ENCODE measurements at regions of chr18 and their contacts with region 1.

Region 1: GRCh38 chr18:11040823-11041656 is 108.3 kb downstream of the PIEZO2 start:
- H3K4me3 ChIP-seq: no peak overlapping the region
- H3K27ac ChIP-seq: no peak overlapping the region
- H3K4me1 ChIP-seq: peaks cover 2% of the 10 kb centered on the region; the same call in 1 of the 2 replicates
- CTCF ChIP-seq: no peak

Region 2: DNA sequence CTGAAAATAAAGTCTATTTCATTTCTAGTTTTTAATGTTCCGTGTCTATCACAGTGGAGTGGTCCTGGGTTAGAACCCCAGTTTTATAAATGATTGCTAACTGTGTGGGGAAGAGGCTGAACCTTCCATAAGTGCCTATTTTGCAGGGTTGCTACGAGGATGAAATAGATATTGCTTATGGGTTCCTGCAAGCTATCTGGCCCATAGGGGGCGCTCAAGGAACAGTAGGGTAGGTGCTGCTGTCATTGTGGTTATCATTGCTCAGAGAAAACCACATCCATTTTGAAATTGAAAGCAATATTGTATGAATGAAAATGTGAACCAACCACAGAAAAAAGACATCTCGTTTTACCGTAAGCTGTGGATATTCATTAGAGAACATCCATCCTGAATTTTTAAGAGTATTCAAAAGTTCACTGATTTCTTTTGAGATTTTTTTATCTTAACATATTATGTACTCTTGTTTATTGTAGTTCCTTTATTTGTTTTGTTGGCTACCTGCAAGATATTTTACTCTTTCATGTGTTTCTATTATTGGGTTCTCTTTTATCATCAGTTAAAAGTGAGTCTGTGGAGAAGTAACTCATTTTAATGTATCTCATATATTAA is 253.6 kb before region 1 on chr18:
- CTCF ChIA-PET with region 1: interaction called, 15 read pairs
- POLR2A ChIA-PET with region 1: no interaction called
- H3K4me3 ChIP-seq: no peak overlapping the region
- H3K27ac ChIP-seq: no peak overlapping the region
- H3K4me1 ChIP-seq: no peaks in the 10 kb centered on the region
- CTCF ChIP-seq: 0 out of 2 replicates have a peak, but pooled peaks have one; percentile 33

Region 3: DNA sequence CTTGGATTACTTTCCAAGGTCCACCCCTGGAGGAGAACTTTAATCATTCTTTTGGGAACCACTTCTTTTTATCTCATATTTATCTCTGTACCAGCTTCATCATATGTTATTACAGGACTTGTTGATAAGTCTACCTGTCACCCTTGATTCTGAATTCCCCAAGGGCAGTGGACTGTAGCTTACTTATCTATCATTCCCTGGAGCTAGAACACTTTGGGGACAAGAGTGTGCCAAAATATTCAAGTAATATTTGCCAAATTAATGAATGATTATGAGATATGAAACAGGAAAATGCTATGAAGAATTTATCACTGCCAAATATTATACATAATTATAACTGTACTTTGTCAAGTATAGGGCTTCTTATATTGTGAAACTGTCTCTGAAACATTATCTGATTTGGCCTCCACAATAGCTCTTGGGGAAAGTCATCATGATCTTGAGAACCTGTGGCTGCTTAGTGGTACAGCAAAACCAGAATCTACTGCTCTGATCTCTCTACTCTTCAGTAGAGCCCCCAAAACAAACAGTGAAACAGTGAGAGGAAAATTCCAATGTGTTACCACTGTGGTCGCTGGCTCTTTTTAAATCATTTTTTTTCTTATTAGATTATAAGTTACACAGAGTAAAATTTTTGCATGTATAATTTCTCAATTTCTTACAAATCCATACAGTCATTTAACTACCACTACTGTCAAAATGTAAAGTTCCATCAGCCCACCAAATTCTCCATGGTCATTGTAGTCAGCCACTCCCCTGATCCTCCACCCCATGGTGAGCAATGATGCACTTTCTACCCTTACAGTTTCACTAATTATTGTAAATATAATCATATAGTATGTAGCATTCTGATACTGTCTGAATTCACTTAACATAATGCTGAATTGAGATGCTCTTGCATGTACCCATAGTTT is 89.2 kb before region 1 on chr18:
- CTCF ChIA-PET with region 1: no interaction called
- POLR2A ChIA-PET with region 1: no interaction called
- H3K4me3 ChIP-seq: no peak overlapping the region
- H3K27ac ChIP-seq: no peak overlapping the region
- H3K4me1 ChIP-seq: no peaks in the 10 kb centered on the region
- CTCF ChIP-seq: no peak

Region 4: DNA sequence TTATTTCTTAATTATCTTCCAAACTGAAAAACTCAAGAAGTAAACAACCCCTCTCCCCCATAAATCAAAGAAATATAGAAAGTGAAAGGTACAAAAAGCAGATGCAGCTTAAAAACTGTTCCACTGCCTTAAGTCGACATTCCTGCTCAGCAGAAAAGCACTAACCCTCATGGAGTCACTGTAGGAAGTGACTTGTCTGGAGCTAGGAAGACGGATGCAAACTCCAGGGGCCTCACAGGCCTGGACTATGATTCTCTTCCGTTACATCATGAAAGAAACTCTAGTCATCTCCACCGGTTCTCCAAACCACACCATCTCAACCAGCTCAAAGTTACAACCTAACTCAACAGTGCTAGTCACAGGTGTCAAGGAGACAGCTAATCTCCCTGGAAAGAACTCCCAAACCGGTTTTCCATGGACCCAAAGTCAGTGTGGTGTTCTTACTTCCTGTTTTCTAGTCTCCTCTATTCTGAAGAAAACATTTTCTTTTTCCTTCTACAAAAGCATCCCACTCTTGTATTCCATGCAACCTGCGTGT is 20.1 kb before region 1 on chr18:
- CTCF ChIA-PET with region 1: interaction called, 13 read pairs
- POLR2A ChIA-PET with region 1: no interaction called
- H3K4me3 ChIP-seq: no peak overlapping the region
- H3K27ac ChIP-seq: no peak overlapping the region
- H3K4me1 ChIP-seq: no peaks in the 10 kb centered on the region
- CTCF ChIP-seq: no peak

Region 5: GRCh38 chr18:11027862-11028261 is 13.2 kb before region 1 on chr18:
- CTCF ChIA-PET with region 1: interaction called, 28 read pairs
- POLR2A ChIA-PET with region 1: no interaction called
- H3K4me3 ChIP-seq: no peak overlapping the region
- H3K27ac ChIP-seq: no peak overlapping the region
- H3K4me1 ChIP-seq: no peaks in the 10 kb centered on the region
- CTCF ChIP-seq: no peak

Region 6: DNA sequence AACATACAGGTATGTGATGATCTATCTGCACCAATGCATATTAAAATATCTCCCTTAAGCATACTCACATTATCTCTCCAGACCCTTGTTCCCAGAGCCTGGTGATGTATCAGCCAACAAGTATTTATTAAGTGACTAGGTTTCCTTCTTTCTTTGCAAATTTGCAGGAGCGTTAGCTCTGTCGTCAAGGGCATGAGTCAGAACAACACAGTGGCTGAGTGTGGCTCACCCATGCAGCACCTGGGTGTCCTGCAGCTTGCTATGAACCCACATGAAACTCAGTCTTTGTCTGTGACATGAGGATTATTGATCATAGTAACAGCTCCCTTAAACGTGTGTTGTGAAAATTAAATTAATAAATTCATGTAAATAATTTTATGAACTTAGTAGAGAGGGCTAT is 11.8 kb after region 1 on chr18:
- CTCF ChIA-PET with region 1: interaction called, 15 read pairs
- POLR2A ChIA-PET with region 1: no interaction called
- H3K4me3 ChIP-seq: no peak overlapping the region
- H3K27ac ChIP-seq: no peak overlapping the region
- H3K4me1 ChIP-seq: no peaks in the 10 kb centered on the region; the same call in 1 of the 2 replicates
- CTCF ChIP-seq: no peak

Region 7: DNA sequence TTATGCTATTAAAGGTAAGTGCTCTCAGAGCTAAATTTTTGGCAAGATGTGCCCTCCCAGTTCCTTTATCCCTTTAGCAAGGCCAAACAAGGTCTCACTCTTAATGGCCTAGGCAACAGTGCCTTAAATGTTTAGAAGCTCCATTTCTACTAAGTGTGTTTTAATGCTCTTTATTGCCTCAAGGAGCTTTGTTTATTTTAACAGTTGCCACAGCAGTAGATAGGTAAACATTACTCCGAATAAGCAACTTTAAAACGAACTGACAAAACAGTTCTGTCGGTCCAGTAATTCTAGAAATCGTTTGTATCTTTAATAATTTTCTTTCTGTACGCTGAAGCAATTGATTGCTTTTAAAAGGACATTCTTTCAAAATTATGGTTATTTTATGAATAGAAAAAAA is 33.8 kb after region 1 on chr18:
- CTCF ChIA-PET with region 1: no interaction called
- POLR2A ChIA-PET with region 1: no interaction called
- H3K4me3 ChIP-seq: no peak overlapping the region
- H3K27ac ChIP-seq: no peak overlapping the region
- H3K4me1 ChIP-seq: peaks cover 12% of the 10 kb centered on the region
- CTCF ChIP-seq: no peak

Region 8: DNA sequence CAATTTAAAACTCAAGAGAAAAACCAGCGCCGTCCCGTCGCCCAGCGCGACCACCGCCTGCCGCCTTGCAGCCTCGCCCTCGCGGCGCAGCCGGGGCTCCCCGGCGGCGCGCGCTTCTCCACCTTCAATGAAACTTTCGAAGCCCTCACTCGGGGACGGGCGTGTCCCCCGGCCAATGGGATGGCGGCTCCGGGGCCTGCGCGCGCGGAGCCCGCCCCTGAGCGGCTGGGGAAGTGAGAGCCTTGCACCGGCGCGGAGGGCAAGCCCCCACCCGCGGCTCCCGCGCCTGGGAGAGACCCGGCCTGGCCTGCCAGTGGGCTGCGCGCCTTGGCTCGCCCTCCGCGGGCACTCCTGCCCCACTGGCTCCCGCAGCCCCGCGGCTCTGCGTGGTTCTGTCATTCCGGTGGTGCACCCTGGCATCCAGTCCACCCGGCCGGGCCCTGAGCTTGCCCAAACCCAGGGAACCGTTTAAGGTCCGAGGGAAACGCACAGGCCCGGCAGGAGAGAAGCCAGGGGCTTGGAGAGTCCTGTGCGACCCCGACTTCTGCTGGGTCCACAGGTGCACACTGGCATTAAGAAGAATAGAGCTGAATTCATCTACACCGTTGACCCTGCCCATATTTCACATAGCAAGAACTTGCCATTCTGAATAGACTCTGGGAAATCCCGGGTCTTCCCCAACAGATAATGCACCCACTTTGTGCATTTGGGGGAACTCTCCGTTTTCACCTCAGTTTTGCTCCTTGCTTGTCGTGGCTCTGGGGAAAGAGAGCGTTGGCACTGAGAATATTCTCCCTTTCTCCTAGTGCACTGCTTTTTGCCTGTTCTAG is 108.6 kb after region 1 on chr18 and contains the start of gene PIEZO2:
- CTCF ChIA-PET with region 1: interaction called, 11 read pairs
- POLR2A ChIA-PET with region 1: no interaction called
- H3K4me3 ChIP-seq: peak within 1 kb of the TSS; percentile 45
- H3K27ac ChIP-seq: peak within 1 kb of the TSS; percentile 68; the same call in 1 of the 2 replicates
- H3K4me1 ChIP-seq: peaks cover 6% of the 10 kb centered on the region
- CTCF ChIP-seq: no peak

Measured in HEK293 (cell line).